B cell (primary cell): ENCODE measurements at regions of chr6 and their contacts with region 1.

Region 1: GRCh38 chr6:35209081-35209480 is 4.7 kb upstream of the SCUBE3 start:
- DNase-seq: no peak
- ATAC-seq: no peak
- H3K4me3 ChIP-seq: no peak overlapping the region
- H3K4me3 Mint-ChIP-seq: no peak overlapping the region
- H3K27ac ChIP-seq: no peak overlapping the region
- H3K27ac Mint-ChIP-seq: no peak overlapping the region
- H3K4me1 ChIP-seq: peaks cover 5 to 9% of the 10 kb centered on the region in 2 donors
- H3K4me1 Mint-ChIP-seq: peaks cover 6% of the 10 kb centered on the region
- H3K27me3 ChIP-seq: peaks cover 0 to 42% (median 18%) of the 10 kb centered on the region in 4 experiments
- H3K27me3 Mint-ChIP-seq: peaks cover 71% of the 10 kb centered on the region
- CTCF ChIP-seq: no peak

Region 2: GRCh38 chr6:34986845-34987246 is 222.2 kb before region 1 on chr6:
- CTCF ChIA-PET with region 1: interaction called, 18 read pairs
- POLR2A ChIA-PET with region 1: no interaction called
- intact Hi-C with region 1: no loop called
- DNase-seq: peak; percentile 64
- ATAC-seq: no peak
- H3K4me3 ChIP-seq: no peak overlapping the region
- H3K4me3 Mint-ChIP-seq: no peak overlapping the region
- H3K27ac ChIP-seq: no peak overlapping the region
- H3K27ac Mint-ChIP-seq: no peak overlapping the region
- H3K4me1 ChIP-seq: no peaks in the 10 kb centered on the region
- H3K4me1 Mint-ChIP-seq: no peaks in the 10 kb centered on the region
- H3K27me3 ChIP-seq: no peaks in the 10 kb centered on the region
- H3K27me3 Mint-ChIP-seq: no peaks in the 10 kb centered on the region
- CTCF ChIP-seq: peak; percentile 83

Region 3: DNA sequence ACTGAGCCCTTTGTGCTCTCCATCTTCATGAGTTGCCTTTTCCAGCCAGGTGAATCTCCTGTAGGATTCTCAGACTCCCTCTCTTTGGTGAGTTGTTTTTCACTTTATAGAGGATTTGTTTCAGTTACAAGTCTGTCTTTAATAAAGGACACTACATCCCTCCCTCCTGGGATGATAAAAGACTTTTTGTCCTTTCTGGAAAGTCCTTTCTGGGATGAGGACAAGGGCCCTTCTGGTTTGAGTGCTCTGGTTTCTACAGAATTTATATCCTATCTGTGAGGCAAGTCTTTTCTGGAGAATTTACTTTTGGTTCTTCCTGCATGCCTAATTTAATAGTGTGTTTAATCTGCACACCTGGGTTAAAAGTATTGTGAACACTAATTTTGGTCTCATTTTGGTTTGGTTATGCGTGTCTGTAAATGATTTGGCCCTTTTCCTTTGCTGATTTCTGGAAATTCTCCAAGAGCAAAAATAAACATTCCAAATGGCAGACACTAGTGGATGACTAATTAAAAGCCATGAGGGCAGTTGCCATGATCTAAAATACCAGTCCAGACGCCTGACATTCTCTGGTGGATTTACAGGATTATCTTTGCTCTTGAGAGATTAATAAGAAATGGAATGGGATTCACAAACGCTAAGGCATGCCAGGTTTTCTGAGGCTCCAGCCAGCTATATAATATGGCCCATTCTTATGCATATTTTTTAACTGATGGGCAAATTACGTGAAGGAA is 112.8 kb before region 1 on chr6:
- CTCF ChIA-PET with region 1: no interaction called
- POLR2A ChIA-PET with region 1: no interaction called
- intact Hi-C with region 1: no loop called
- DNase-seq: no peak
- ATAC-seq: no peak
- H3K4me3 ChIP-seq: no peak overlapping the region
- H3K4me3 Mint-ChIP-seq: no peak overlapping the region
- H3K27ac ChIP-seq: no peak overlapping the region
- H3K27ac Mint-ChIP-seq: no peak overlapping the region
- H3K4me1 ChIP-seq: no peaks in the 10 kb centered on the region
- H3K4me1 Mint-ChIP-seq: no peaks in the 10 kb centered on the region
- H3K27me3 ChIP-seq: no peaks in the 10 kb centered on the region
- H3K27me3 Mint-ChIP-seq: no peaks in the 10 kb centered on the region
- CTCF ChIP-seq: no peak